ENCODE measurements at regions of chr5 and their contacts with region 1.

Region 1: DNA sequence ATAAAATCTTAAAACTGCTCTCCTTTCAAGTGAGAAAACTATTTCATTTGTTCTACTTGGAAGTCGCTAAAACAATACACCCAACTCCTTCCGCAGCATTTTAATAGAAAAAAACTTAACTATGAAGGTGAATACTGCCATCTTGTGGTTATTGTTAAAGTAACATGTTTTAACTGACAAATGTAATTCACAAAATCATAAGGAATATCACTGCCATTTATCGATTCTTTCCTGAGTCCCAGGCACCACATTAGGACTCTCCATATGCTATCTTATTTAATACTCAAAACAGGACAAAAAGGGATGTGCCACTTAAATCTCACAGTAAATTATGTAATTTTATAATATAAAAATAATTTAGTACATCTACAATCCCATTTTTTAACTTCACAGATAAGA is 130.5 kb upstream of the ITGA1 start:
- DNase-seq: no peak
- ATAC-seq: no peak
- H3K4me3 Mint-ChIP-seq: no peak overlapping the region
- H3K27ac Mint-ChIP-seq: no peak overlapping the region
- H3K4me1 Mint-ChIP-seq: no peaks in the 10 kb centered on the region
- H3K27me3 Mint-ChIP-seq: peaks cover 11% of the 10 kb centered on the region

Region 2: DNA sequence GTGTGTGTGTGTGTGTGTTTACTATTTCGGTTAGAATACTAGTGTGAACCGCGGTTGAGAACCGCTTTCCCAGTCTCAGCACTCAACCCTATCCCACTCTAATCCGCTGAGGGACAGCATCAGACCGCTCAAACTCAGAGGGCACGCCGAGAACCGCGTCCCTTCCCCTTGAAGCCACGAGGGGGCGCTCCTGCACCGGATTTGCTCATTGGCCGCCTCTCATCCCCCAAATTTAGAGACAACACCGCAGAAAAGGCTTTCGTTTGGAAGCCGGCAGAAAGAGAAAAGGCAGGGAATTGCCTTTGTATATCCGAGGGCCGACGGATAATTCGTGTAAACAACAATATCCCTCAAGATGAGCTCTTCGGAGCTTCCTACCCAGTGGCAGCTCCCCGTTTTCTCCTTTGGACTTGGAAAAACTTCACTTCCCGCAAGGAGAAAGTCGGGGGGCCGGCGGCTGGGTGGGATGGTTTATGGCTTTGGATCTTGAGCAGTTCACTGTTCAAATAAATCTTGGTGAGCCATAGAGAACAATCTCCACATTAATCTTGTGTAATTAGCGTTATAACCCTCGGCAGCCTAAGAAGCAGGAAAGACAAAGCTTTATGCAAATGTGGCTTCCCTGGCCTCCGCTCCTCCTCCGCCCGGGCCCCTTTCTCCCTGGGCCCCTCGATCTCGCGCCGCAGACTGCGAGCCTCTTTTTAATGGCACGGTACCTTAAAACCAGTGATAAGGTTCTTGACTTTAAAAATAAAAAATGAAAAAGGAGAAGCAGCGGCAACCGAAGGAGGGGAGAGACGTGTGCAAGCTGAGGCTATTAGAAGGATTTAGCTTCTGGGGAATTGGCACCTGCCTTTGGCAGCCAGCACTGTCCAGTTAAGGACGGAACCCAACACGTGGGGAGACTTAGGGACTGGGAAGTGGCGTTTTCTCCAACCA is 1694.0 kb before region 1 on chr5:
- CTCF ChIA-PET with region 1: interaction called, 10 read pairs
- POLR2A ChIA-PET with region 1: no interaction called
- DNase-seq: peak; percentile 82
- ATAC-seq: peak; percentile 87
- H3K4me3 Mint-ChIP-seq: peak overlapping the region; percentile 80
- H3K27ac Mint-ChIP-seq: peak overlapping the region; percentile 63
- H3K4me1 Mint-ChIP-seq: peaks cover 38% of the 10 kb centered on the region
- H3K27me3 Mint-ChIP-seq: peaks cover 54% of the 10 kb centered on the region

Region 3: GRCh38 chr5:52674815-52675545 is 17.7 kb after region 1 on chr5:
- CTCF ChIA-PET with region 1: no interaction called
- POLR2A ChIA-PET with region 1: no interaction called
- DNase-seq: no peak
- ATAC-seq: no peak
- H3K4me3 Mint-ChIP-seq: no peak overlapping the region
- H3K27ac Mint-ChIP-seq: no peak overlapping the region
- H3K4me1 Mint-ChIP-seq: peaks cover 19% of the 10 kb centered on the region
- H3K27me3 Mint-ChIP-seq: peaks cover 6% of the 10 kb centered on the region

Measured in activated CD8-positive, alpha-beta T cell treated with anti-CD3 and anti-CD28 coated beads, Interleukin-2, amount 10 ng/mL, durations not matched to agents 7 days and 5 days (primary cell).